ENCODE measurements at regions of chr20 and their contacts with region 1.

Region 1: GRCh38 chr20:34069341-34070078 is 42.5 kb downstream of the EIF2S2 start:
- DNase-seq: peak; percentile 68
- ATAC-seq: peak; percentile 86
- H3K4me3 ChIP-seq: no peak overlapping the region
- H3K27ac ChIP-seq: no peak overlapping the region
- H3K4me1 ChIP-seq: peaks cover 0 to 22% of the 10 kb centered on the region in 2 experiments; a peak in 2 of 4 replicates
- H3K27me3 ChIP-seq: no peaks in the 10 kb centered on the region
- CTCF ChIP-seq: peak; percentile 86 to 93 (median 88)
- POLR2A ChIP-seq: no peak
- RAD21 ChIP-seq: peak; percentile 90

Region 2: GRCh38 chr20:33443512-33444239 is 625.8 kb before region 1 on chr20 and contains the start of gene SNTA1:
- CTCF ChIA-PET with region 1: no interaction called
- POLR2A ChIA-PET with region 1: no interaction called
- RAD21 ChIA-PET with region 1: no interaction called
- intact Hi-C with region 1: loop called (anchors 5 kb)
- DNase-seq: no peak
- ATAC-seq: peak; percentile 91
- H3K4me3 ChIP-seq: peak within 1 kb of the TSS; percentile 57 to 69
- H3K27ac ChIP-seq: peak within 1 kb of the TSS; percentile 63; the same call in 1 of the 2 replicates
- H3K4me1 ChIP-seq: peaks cover 12 to 22% of the 10 kb centered on the region in 2 experiments
- H3K27me3 ChIP-seq: no peaks in the 10 kb centered on the region
- CTCF ChIP-seq: no peak
- POLR2A ChIP-seq: no peak
- RAD21 ChIP-seq: no peak
- total RNA-seq, gene SNTA1: 14.6 TPM

Region 3: DNA sequence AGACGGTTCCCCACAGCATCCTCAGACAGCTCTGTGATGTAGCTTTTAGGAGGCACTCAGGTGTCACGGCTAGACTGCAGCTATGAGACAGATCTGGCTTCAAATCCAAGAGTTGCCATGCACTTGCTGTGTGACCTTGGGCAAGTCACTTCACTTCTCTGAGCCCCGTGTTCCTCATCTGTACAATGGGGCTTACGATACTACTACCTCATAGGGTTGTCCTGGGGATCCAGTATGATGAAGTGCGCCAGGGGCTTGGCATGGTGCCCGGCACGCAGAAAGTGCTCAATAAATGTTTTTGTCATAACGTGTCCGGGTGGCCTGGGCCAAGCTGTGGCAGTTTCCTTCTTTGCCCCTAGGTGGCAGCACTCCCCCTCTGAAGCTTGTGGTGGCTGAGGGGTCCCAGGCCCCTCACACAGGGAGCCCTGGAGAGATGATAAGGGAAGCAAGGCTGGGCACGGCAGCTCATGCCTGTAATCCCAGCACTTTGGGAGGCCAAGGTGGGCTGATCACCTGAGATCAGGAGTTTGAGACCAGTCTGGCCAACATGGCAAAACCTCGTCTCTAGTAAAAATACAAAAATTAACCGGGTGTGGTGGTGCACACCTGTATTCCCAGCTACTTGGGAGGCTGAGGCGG is 277.4 kb before region 1 on chr20:
- CTCF ChIA-PET with region 1: interaction called, 3 read pairs
- POLR2A ChIA-PET with region 1: no interaction called
- RAD21 ChIA-PET with region 1: no interaction called
- intact Hi-C with region 1: loop called (anchors 10 kb)
- DNase-seq: no peak
- ATAC-seq: peak; percentile 11; the same call in 1 of the 2 replicates
- H3K4me3 ChIP-seq: no peak overlapping the region
- H3K27ac ChIP-seq: no peak overlapping the region
- H3K4me1 ChIP-seq: peaks cover 64 to 94% of the 10 kb centered on the region in 2 experiments
- H3K27me3 ChIP-seq: no peaks in the 10 kb centered on the region
- CTCF ChIP-seq: peak; percentile 55 to 95 (median 87); a peak in 5 of 6 replicates
- POLR2A ChIP-seq: no peak
- RAD21 ChIP-seq: peak; percentile 83

Region 4: GRCh38 chr20:33862709-33863403 is 206.7 kb before region 1 on chr20:
- CTCF ChIA-PET with region 1: no interaction called
- POLR2A ChIA-PET with region 1: no interaction called
- RAD21 ChIA-PET with region 1: no interaction called
- intact Hi-C with region 1: loop called (anchors 1 kb)
- DNase-seq: no peak
- ATAC-seq: peak; percentile 84
- H3K4me3 ChIP-seq: no peak overlapping the region
- H3K27ac ChIP-seq: no peak overlapping the region
- H3K4me1 ChIP-seq: peaks cover 0 to 12% of the 10 kb centered on the region in 2 experiments; a peak in 1 of 4 replicates
- H3K27me3 ChIP-seq: no peaks in the 10 kb centered on the region
- CTCF ChIP-seq: peak; percentile 43 to 95 (median 82); a peak in 5 of 6 replicates
- POLR2A ChIP-seq: no peak
- RAD21 ChIP-seq: peak; percentile 69

Region 5: GRCh38 chr20:33933469-33933909 is 136.0 kb before region 1 on chr20:
- CTCF ChIA-PET with region 1: interaction called, 8 read pairs
- POLR2A ChIA-PET with region 1: no interaction called
- RAD21 ChIA-PET with region 1: no interaction called
- intact Hi-C with region 1: loop called (anchors 1 kb)
- DNase-seq: peak; percentile 48
- ATAC-seq: peak; percentile 94
- H3K4me3 ChIP-seq: no peak overlapping the region
- H3K27ac ChIP-seq: no peak overlapping the region; the same call in 1 of the 2 replicates
- H3K4me1 ChIP-seq: 0 out of 4 replicates have a peak, but pooled peaks cover 0 to 3% of the 10 kb centered on the region in 2 experiments
- H3K27me3 ChIP-seq: no peaks in the 10 kb centered on the region
- CTCF ChIP-seq: peak; percentile 49 to 65 (median 63); a peak in 5 of 6 replicates
- POLR2A ChIP-seq: no peak
- RAD21 ChIP-seq: peak; percentile 72

Region 6: GRCh38 chr20:33947709-33948295 is 121.7 kb before region 1 on chr20:
- CTCF ChIA-PET with region 1: interaction called, 3 read pairs
- POLR2A ChIA-PET with region 1: no interaction called
- RAD21 ChIA-PET with region 1: no interaction called
- intact Hi-C with region 1: loop called (anchors 1 kb)
- DNase-seq: peak; percentile 89
- ATAC-seq: peak; percentile 97
- H3K4me3 ChIP-seq: no peak overlapping the region
- H3K27ac ChIP-seq: no peak overlapping the region
- H3K4me1 ChIP-seq: no peaks in the 10 kb centered on the region
- H3K27me3 ChIP-seq: no peaks in the 10 kb centered on the region
- CTCF ChIP-seq: peak; percentile 95 to 98 (median 96)
- POLR2A ChIP-seq: no peak
- RAD21 ChIP-seq: peak; percentile 73

Region 7: DNA sequence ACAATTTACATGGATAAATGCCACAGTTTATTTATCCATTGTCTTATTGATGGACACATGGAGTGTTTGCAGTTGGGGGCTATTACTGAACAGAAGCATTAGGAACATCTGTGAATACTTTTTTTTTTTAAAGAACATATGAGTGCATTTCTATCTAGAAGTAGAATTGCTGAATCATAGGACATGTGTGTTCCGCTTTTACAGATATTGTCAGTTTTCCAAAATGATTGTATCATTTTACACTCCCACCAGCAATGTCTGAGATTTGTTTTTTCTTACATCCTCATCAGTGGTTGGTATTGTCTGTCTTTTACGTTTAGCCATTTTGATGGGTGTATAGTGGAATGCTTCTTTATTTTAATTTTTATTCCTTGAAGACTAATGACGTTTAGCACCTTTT is 129.7 kb after region 1 on chr20:
- CTCF ChIA-PET with region 1: no interaction called
- POLR2A ChIA-PET with region 1: no interaction called
- RAD21 ChIA-PET with region 1: no interaction called
- intact Hi-C with region 1: no loop called
- DNase-seq: no peak
- ATAC-seq: no peak
- H3K4me3 ChIP-seq: no peak overlapping the region
- H3K27ac ChIP-seq: no peak overlapping the region
- H3K4me1 ChIP-seq: no peaks in the 10 kb centered on the region
- H3K27me3 ChIP-seq: no peaks in the 10 kb centered on the region
- CTCF ChIP-seq: no peak
- POLR2A ChIP-seq: no peak
- RAD21 ChIP-seq: no peak